CD8-positive, alpha-beta T cell (primary cell): ENCODE measurements at regions of chr20 and their contacts with region 1.

Region 1: GRCh38 chr20:23889775-23890211 is 10.2 kb upstream of the CST5 start:
- DNase-seq: peak; percentile 37 to 82 (median 63)
- ATAC-seq: peak; percentile 88
- H3K4me3 ChIP-seq: no peak overlapping the region
- H3K4me3 Mint-ChIP-seq: no peak overlapping the region
- H3K27ac ChIP-seq: no peak overlapping the region
- H3K27ac Mint-ChIP-seq: no peak overlapping the region
- H3K4me1 ChIP-seq: peaks cover 9% of the 10 kb centered on the region
- H3K4me1 Mint-ChIP-seq: no peaks in the 10 kb centered on the region
- H3K27me3 ChIP-seq: no peaks in the 10 kb centered on the region
- H3K27me3 Mint-ChIP-seq: peaks cover 4% of the 10 kb centered on the region
- CTCF ChIP-seq: peak; percentile 61

Region 2: GRCh38 chr20:23315099-23315498 is 574.7 kb before region 1 on chr20:
- CTCF ChIA-PET with region 1: no interaction called
- POLR2A ChIA-PET with region 1: no interaction called
- intact Hi-C with region 1: no loop called
- DNase-seq: no peak
- ATAC-seq: no peak
- H3K4me3 ChIP-seq: no peak overlapping the region
- H3K4me3 Mint-ChIP-seq: no peak overlapping the region
- H3K27ac ChIP-seq: no peak overlapping the region
- H3K27ac Mint-ChIP-seq: no peak overlapping the region
- H3K4me1 ChIP-seq: no peaks in the 10 kb centered on the region
- H3K4me1 Mint-ChIP-seq: no peaks in the 10 kb centered on the region
- H3K27me3 ChIP-seq: no peaks in the 10 kb centered on the region
- H3K27me3 Mint-ChIP-seq: peaks cover 4% of the 10 kb centered on the region
- CTCF ChIP-seq: no peak

Region 3: GRCh38 chr20:23857962-23858565 is 31.7 kb before region 1 on chr20:
- CTCF ChIA-PET with region 1: no interaction called
- POLR2A ChIA-PET with region 1: no interaction called
- intact Hi-C with region 1: no loop called
- DNase-seq: no peak
- ATAC-seq: no peak
- H3K4me3 ChIP-seq: no peak overlapping the region
- H3K4me3 Mint-ChIP-seq: no peak overlapping the region
- H3K27ac ChIP-seq: no peak overlapping the region
- H3K27ac Mint-ChIP-seq: no peak overlapping the region
- H3K4me1 ChIP-seq: no peaks in the 10 kb centered on the region
- H3K4me1 Mint-ChIP-seq: no peaks in the 10 kb centered on the region
- H3K27me3 ChIP-seq: no peaks in the 10 kb centered on the region
- H3K27me3 Mint-ChIP-seq: peaks cover 3% of the 10 kb centered on the region
- CTCF ChIP-seq: no peak

Region 4: GRCh38 chr20:23928788-23929187 is 39.0 kb after region 1 on chr20:
- CTCF ChIA-PET with region 1: no interaction called
- POLR2A ChIA-PET with region 1: no interaction called
- intact Hi-C with region 1: loop called in 1 of 2 experiments (anchors 5 kb)
- DNase-seq: peak in 8 of 9 experiments; percentile 20 to 81 (median 48)
- ATAC-seq: peak; percentile 93
- H3K4me3 ChIP-seq: peak overlapping the region in 1 of 2 experiments; percentile 14
- H3K4me3 Mint-ChIP-seq: peak overlapping the region; percentile 36
- H3K27ac ChIP-seq: no peak overlapping the region
- H3K27ac Mint-ChIP-seq: peak overlapping the region; percentile 81
- H3K4me1 ChIP-seq: peaks cover 29% of the 10 kb centered on the region
- H3K4me1 Mint-ChIP-seq: peaks cover 40% of the 10 kb centered on the region
- H3K27me3 ChIP-seq: no peaks in the 10 kb centered on the region
- H3K27me3 Mint-ChIP-seq: no peaks in the 10 kb centered on the region
- CTCF ChIP-seq: no peak

Region 5: GRCh38 chr20:23995905-23996666 is 106.3 kb after region 1 on chr20:
- CTCF ChIA-PET with region 1: interaction called, 7 read pairs
- POLR2A ChIA-PET with region 1: no interaction called
- intact Hi-C with region 1: loop called (anchors 1 to 5 kb)
- DNase-seq: peak; percentile 13 to 81 (median 68)
- ATAC-seq: peak; percentile 38
- H3K4me3 ChIP-seq: no peak overlapping the region
- H3K4me3 Mint-ChIP-seq: no peak overlapping the region
- H3K27ac ChIP-seq: no peak overlapping the region
- H3K27ac Mint-ChIP-seq: no peak overlapping the region
- H3K4me1 ChIP-seq: no peaks in the 10 kb centered on the region
- H3K4me1 Mint-ChIP-seq: peaks cover 2% of the 10 kb centered on the region
- H3K27me3 ChIP-seq: no peaks in the 10 kb centered on the region
- H3K27me3 Mint-ChIP-seq: peaks cover 2% of the 10 kb centered on the region
- CTCF ChIP-seq: peak; percentile 95

Region 6: DNA sequence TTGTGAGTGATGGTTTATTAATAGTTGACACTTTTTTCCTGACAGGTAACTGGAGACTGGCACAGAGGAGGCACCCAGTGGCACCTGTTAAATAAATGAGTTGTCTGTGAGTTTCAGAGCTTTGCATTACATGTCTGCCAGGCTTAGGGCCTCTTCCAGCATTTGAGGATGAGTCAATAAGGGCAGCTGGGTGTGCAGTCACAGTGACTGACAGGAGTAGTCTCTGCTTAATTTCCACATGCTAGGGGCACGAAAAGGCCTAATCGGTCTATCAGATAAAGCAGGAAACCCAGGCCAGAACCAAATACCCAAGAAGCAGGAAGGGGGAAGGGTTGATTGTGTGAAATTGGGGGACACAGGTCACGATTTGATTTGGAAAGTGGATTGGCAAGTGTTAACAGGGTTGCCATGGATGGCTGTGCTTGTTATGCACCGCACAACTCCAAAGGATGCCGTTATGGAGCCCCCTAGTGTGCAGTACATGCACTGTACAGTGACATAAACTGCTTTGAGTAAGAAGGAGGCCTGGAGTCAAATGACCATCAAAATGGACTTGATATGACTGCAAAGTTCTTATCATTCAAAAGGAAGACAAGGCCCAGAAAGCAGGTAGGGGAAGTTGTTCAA is 210.7 kb after region 1 on chr20:
- CTCF ChIA-PET with region 1: interaction called, 8 read pairs
- POLR2A ChIA-PET with region 1: no interaction called
- intact Hi-C with region 1: loop called in 1 of 2 experiments (anchors 2 kb)
- DNase-seq: peak; percentile 16 to 78 (median 59)
- ATAC-seq: peak; percentile 93
- H3K4me3 ChIP-seq: no peak overlapping the region
- H3K4me3 Mint-ChIP-seq: no peak overlapping the region
- H3K27ac ChIP-seq: no peak overlapping the region
- H3K27ac Mint-ChIP-seq: no peak overlapping the region
- H3K4me1 ChIP-seq: peaks cover 4% of the 10 kb centered on the region
- H3K4me1 Mint-ChIP-seq: peaks cover 4% of the 10 kb centered on the region
- H3K27me3 ChIP-seq: no peaks in the 10 kb centered on the region
- H3K27me3 Mint-ChIP-seq: peaks cover 2% of the 10 kb centered on the region
- CTCF ChIP-seq: peak; percentile 75

Region 7: GRCh38 chr20:24160563-24161375 is 271.0 kb after region 1 on chr20:
- CTCF ChIA-PET with region 1: no interaction called
- POLR2A ChIA-PET with region 1: no interaction called
- intact Hi-C with region 1: loop called (anchors 1 to 2 kb)
- DNase-seq: peak in 2 of 9 experiments; percentile 20 to 46
- ATAC-seq: no peak
- H3K4me3 ChIP-seq: no peak overlapping the region
- H3K4me3 Mint-ChIP-seq: no peak overlapping the region
- H3K27ac ChIP-seq: no peak overlapping the region
- H3K27ac Mint-ChIP-seq: no peak overlapping the region
- H3K4me1 ChIP-seq: no peaks in the 10 kb centered on the region
- H3K4me1 Mint-ChIP-seq: peaks cover 2% of the 10 kb centered on the region
- H3K27me3 ChIP-seq: no peaks in the 10 kb centered on the region
- H3K27me3 Mint-ChIP-seq: peaks cover 2% of the 10 kb centered on the region
- CTCF ChIP-seq: peak; percentile 24